Endothelial cell of umbilical vein (primary cell): ENCODE measurements at regions of chr9 and their contacts with region 1.

Region 1: DNA sequence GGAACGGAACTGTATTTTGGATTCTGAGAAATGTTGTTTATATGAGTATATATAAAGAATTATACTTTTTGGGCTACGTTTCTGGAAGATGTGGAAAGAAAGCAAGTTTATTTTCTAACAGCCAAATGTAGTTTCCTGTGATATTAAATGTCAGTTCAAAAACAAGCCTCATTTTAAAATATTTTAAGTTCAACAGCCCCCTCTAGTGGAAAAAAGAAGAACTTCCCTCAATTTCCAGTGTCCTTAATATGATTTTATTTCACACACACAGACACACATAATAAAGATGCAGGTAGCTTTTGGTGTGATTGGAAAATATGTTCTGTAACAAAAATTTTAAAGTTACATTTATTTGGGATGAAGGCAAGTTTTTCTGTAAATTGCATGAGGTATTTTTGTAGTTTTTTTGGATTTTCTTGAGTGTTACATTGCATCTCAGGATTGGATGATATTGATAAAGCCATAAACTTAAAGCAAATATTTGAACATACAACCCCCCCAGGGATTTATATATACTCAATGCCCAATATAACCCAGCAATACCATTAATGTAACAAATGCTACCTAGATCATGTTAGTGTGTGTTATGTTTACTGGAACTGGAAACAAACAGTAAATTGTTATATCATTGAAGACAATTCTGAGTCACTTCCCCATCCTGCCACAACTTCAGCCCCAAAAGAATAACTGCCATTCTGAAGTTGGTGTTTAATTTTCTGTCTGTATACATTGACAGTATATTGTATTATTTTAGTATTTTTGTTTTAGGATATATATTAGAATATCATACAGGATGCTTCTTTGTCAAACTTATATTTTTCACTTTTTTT is 54.0 kb downstream of the CCDC171 start:
- DNase-seq: peak; percentile 70
- H3K4me3 ChIP-seq: no peak overlapping the region
- H3K27ac ChIP-seq: peak overlapping the region; percentile 41
- H3K4me1 ChIP-seq: peaks cover 19% of the 10 kb centered on the region
- H3K27me3 ChIP-seq: no peaks in the 10 kb centered on the region
- CTCF ChIP-seq: peak; percentile 26 to 32
- POLR2A ChIP-seq: no peak

Region 2: GRCh38 chr9:15104826-15105420 is 501.9 kb before region 1 on chr9:
- CTCF ChIA-PET with region 1: interaction called, 3 read pairs
- POLR2A ChIA-PET with region 1: no interaction called
- dilution Hi-C with region 1: no loop called
- intact Hi-C with region 1: loop called (anchors 10 kb)
- DNase-seq: peak; percentile 51
- H3K4me3 ChIP-seq: no peak overlapping the region
- H3K27ac ChIP-seq: no peak overlapping the region
- H3K4me1 ChIP-seq: no peaks in the 10 kb centered on the region
- H3K27me3 ChIP-seq: peaks cover 3 to 6% of the 10 kb centered on the region in 2 experiments
- CTCF ChIP-seq: peak; percentile 66 to 72
- POLR2A ChIP-seq: no peak

Region 3: GRCh38 chr9:15178631-15179030 is 428.2 kb before region 1 on chr9:
- CTCF ChIA-PET with region 1: no interaction called
- POLR2A ChIA-PET with region 1: no interaction called
- dilution Hi-C with region 1: no loop called
- intact Hi-C with region 1: no loop called
- DNase-seq: no peak
- H3K4me3 ChIP-seq: no peak overlapping the region
- H3K27ac ChIP-seq: no peak overlapping the region
- H3K4me1 ChIP-seq: no peaks in the 10 kb centered on the region
- H3K27me3 ChIP-seq: no peaks in the 10 kb centered on the region
- CTCF ChIP-seq: no peak
- POLR2A ChIP-seq: no peak

Region 4: GRCh38 chr9:15306757-15307534 is 299.9 kb before region 1 on chr9 and contains the start of gene TTC39B:
- CTCF ChIA-PET with region 1: no interaction called
- POLR2A ChIA-PET with region 1: no interaction called
- dilution Hi-C with region 1: no loop called
- intact Hi-C with region 1: loop called (anchors 5 kb)
- DNase-seq: peak; percentile 91
- H3K4me3 ChIP-seq: peak within 1 kb of the TSS; percentile 57 to 63 (median 59)
- H3K27ac ChIP-seq: peak within 1 kb of the TSS; percentile 14
- H3K4me1 ChIP-seq: peaks cover 4% of the 10 kb centered on the region
- H3K27me3 ChIP-seq: no peaks in the 10 kb centered on the region
- CTCF ChIP-seq: peak in 1 of 2 donors; percentile 2
- POLR2A ChIP-seq: peak; percentile 69
- total RNA-seq, gene TTC39B: 5.4 and 6.8 TPM in 2 replicates

Region 5: DNA sequence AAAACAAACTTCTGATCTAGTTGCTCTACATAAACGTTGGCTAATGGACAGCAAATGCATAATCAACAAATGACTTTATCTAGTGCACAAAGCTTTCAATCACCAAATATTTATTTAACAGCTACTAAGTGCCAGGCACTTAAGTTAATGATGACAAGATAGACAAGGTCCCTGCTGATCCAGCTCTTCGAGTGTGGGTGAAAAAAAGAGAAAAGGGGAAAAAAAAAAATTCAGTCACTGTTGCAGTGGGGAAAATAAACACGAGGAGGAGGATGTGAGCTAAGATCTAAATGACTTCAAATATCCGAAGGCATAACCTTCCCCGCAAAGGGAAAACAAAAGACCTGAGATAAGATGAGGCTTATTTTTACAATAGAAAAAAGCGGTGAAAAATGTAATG is 105.7 kb before region 1 on chr9:
- CTCF ChIA-PET with region 1: interaction called, 28 read pairs
- POLR2A ChIA-PET with region 1: no interaction called
- dilution Hi-C with region 1: no loop called
- intact Hi-C with region 1: no loop called
- DNase-seq: peak; percentile 72
- H3K4me3 ChIP-seq: no peak overlapping the region
- H3K27ac ChIP-seq: no peak overlapping the region
- H3K4me1 ChIP-seq: peaks cover 7% of the 10 kb centered on the region
- H3K27me3 ChIP-seq: no peaks in the 10 kb centered on the region
- CTCF ChIP-seq: no peak
- POLR2A ChIP-seq: no peak

Region 6: GRCh38 chr9:15552636-15553527 is 54.0 kb before region 1 on chr9 and contains the start of gene CCDC171:
- CTCF ChIA-PET with region 1: interaction called, 23 read pairs
- POLR2A ChIA-PET with region 1: no interaction called
- dilution Hi-C with region 1: no loop called
- intact Hi-C with region 1: loop called (anchors 2 kb)
- DNase-seq: peak; percentile 94
- H3K4me3 ChIP-seq: peak within 1 kb of the TSS; percentile 56 to 92 (median 79)
- H3K27ac ChIP-seq: peak within 1 kb of the TSS; percentile 2
- H3K4me1 ChIP-seq: peaks cover 8% of the 10 kb centered on the region
- H3K27me3 ChIP-seq: no peaks in the 10 kb centered on the region
- CTCF ChIP-seq: no peak
- POLR2A ChIP-seq: peak; percentile 93
- total RNA-seq, gene CCDC171: 1.4 and 1.6 TPM in 2 replicates

Region 7: DNA sequence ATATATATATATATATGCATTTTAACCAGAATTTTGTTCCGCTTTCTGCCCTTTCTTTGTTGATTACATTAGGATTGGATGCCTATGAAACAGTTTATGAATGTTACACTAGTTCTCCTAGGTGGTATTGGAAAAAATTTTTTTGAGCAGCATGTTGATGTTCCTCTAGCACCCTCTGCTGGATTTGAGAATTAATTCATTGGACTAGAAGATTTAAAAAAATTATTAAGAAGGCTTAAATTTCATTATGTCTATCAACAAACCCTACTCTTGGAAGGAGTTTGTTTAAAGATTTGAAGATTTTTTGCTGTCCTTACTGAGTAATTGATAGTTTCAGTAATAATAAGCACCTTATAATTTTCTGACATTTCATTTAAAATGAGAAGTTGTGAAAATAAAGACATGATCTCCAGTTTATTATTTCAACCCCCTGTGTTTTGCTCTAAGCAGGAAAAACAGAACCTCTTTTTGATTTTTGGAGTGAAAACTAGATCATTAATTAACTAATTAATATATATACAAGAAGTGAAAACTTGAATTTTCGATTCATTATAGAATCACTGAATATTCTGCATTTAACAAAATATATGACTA is 35.6 kb after region 1 on chr9:
- CTCF ChIA-PET with region 1: interaction called, 3 read pairs
- POLR2A ChIA-PET with region 1: no interaction called
- dilution Hi-C with region 1: no loop called
- intact Hi-C with region 1: loop called (anchors 1 kb)
- DNase-seq: peak; percentile 59
- H3K4me3 ChIP-seq: no peak overlapping the region
- H3K27ac ChIP-seq: no peak overlapping the region
- H3K4me1 ChIP-seq: peaks cover 8% of the 10 kb centered on the region
- H3K27me3 ChIP-seq: no peaks in the 10 kb centered on the region
- CTCF ChIP-seq: peak; percentile 24 to 25
- POLR2A ChIP-seq: no peak